Left colon (tissue), 2 donors: ENCODE measurements at regions of chr22 and their contacts with region 1.

Region 1: DNA sequence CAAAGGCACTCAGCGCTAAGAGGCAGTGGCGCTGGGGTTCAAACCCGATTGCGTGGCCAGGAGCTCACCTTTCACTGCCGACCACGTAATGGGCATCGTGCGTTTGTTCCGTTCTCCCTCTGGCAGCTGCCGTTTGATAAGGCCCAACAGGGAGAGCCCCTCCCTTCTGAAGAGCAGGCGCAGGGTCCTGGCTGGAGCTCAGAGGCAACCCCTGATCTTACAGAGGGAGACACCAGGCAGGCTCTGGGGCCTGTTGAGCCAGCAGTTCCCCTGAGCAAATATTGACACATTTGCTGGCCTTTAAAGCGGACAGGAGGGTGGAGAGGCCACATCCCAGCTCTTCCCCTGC is 11.7 kb upstream of the C1QTNF6 start:
- DNase-seq: no peak
- ATAC-seq: peak; percentile 14

Region 2: DNA sequence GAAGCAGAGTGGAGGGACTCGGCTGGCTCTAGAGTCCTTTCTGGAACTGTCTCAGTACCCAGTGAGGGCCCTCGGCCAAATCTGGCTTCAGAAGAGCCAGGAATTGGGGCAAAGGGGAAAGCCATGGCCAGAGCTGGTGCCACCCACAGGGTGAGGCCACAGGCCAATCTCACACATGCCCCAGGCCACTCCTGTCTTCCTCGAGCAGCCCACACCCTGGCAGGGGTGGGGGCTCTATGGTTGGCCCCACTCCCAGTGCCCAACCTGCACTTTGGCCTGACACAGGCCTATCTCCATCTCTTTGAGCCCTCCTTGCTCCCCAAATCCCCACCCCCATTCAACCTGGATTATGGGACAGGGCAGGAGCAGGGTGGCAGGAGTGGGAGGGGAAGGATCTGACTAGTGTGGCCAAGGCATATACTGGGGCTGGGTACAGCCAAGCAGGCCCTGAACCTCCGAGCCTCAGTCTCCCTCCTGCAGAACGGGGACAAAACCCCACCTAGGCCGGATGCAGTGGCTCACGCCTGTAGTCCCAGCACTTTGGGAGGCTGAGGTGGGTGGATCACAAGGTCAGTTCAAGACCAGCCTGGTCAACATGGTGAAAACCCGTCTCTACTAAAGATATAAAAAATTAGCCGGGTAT is 187.4 kb before region 1 on chr22:
- intact Hi-C with region 1: no loop called
- DNase-seq: peak; percentile 79 to 91
- ATAC-seq: peak; percentile 69

Region 3: GRCh38 chr22:37166675-37167066 is 33.1 kb before region 1 on chr22:
- intact Hi-C with region 1: loop called in 1 of 2 experiments (anchors 5 kb)
- DNase-seq: peak; percentile 84 to 93
- ATAC-seq: peak; percentile 81

Region 4: DNA sequence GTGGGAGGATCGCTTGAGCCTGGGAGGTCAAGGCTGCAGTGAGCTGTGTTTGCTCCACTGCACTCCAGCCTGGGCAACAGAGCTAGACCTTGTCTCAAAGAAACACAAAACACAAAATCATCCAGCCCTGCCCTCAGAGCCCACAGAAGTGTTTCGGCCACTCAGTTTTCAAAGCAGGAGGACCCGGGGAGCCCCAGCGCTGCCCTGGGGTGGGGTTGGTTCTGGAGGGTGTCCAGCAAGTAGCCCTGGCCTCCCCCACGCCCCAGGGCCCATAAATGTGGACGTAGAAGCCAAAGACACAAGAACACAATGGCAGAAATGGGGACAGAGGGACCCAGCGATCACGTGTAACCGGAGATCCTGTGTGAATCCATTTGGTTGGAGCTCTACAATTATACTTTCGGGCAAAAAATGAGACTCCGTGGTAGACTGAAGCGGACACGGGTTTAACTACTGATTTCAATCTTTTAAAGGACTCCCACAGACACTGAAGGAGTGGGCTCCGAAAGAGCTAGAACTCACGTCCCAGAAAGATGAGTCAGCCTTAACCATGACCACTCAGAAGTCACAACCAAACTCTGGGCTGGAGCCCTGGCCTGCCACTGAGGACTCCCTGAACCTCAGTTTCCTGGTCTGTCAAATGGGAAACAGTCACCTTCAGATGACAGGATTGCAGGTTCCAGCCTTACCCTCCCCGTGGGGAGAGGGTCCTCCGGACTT is 73.6 kb after region 1 on chr22:
- intact Hi-C with region 1: no loop called
- DNase-seq: no peak
- ATAC-seq: no peak

Region 5: GRCh38 chr22:37716708-37717107 is 517.0 kb after region 1 on chr22:
- intact Hi-C with region 1: no loop called
- DNase-seq: no peak
- ATAC-seq: no peak